ENCODE measurements at regions of chr1 and their contacts with region 1.

Region 1: DNA sequence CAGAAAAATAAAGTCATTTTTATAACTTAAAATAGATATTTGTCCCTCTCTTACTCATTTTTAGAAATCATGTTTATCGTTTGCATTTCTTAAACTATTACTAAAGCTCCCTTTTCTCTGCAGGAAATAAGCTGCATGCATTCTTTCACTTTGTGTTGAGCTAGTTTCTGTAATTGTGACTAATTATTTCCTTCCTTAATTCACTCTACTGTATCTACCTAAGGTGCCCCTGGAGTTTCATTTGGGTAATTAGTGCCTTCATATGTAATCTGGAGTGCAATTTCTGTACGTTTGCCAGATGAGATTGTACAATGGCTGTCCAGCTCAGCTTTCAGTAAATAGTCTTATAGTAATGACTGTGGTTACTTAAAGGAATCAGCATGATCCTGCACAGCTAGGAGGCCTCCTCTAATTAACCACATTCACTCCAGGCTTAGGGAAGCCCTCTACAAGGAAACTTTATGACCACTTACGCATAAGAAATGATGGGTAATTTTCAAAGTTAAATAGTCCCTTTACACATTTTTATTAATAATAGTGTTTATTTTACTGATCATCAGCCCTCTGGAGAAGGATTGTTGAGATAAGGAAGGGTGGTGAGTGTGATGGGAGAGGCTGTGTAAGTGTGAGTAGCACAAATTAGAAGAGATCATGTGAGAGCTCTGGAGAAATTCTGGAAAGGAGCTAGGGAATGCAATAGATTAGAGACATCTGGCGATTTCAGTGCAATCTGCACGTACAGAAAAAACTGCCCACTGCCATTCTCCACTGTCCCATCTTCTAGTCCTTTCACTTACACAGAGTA is 86.8 kb downstream of the LRRC8C start:
- DNase-seq: peak in 4 of 5 donors; percentile 30 to 45 (median 37)
- H3K4me3 ChIP-seq: no peak overlapping the region
- H3K4me3 Mint-ChIP-seq: peak overlapping the region in 7 of 8 donors; percentile 25 to 83 (median 70)
- H3K27ac ChIP-seq: peak overlapping the region; percentile 50
- H3K27ac Mint-ChIP-seq: peak overlapping the region; percentile 84 to 96 (median 91)
- H3K4me1 ChIP-seq: peaks cover 83% of the 10 kb centered on the region
- H3K4me1 Mint-ChIP-seq: peaks cover 52 to 81% (median 72%) of the 10 kb centered on the region in 4 donors
- H3K27me3 ChIP-seq: no peaks in the 10 kb centered on the region
- H3K27me3 Mint-ChIP-seq: no peaks in the 10 kb centered on the region

Region 2: DNA sequence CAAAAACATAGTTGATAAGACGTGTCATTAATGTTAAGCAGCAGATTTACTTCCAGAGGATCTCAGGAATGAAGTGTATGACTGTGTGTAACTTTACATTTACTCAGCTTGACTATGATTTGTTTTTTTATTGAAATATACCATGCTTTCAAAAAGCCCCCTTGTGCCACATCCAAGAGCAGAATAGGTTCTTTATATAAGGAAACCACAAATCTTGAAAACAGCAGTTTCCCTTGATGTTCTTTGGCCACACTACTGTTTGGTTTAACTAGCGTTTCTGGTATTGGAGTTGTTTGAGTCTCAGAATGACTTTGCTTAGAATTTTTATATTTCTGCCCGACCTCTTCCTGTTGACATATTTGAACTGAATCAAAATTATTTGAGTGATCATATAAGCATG is 61.8 kb before region 1 on chr1:
- CTCF ChIA-PET with region 1: interaction called, 11 read pairs
- POLR2A ChIA-PET with region 1: interaction called, 21 read pairs
- intact Hi-C with region 1: no loop called
- DNase-seq: peak; percentile 74 to 86 (median 76)
- H3K4me3 ChIP-seq: no peak overlapping the region
- H3K4me3 Mint-ChIP-seq: peak overlapping the region; percentile 34 to 78 (median 70)
- H3K27ac ChIP-seq: peak overlapping the region; percentile 57
- H3K27ac Mint-ChIP-seq: peak overlapping the region; percentile 86 to 97 (median 92)
- H3K4me1 ChIP-seq: peaks cover 97% of the 10 kb centered on the region
- H3K4me1 Mint-ChIP-seq: peaks cover 71 to 96% (median 85%) of the 10 kb centered on the region in 4 donors
- H3K27me3 ChIP-seq: no peaks in the 10 kb centered on the region
- H3K27me3 Mint-ChIP-seq: no peaks in the 10 kb centered on the region

Region 3: DNA sequence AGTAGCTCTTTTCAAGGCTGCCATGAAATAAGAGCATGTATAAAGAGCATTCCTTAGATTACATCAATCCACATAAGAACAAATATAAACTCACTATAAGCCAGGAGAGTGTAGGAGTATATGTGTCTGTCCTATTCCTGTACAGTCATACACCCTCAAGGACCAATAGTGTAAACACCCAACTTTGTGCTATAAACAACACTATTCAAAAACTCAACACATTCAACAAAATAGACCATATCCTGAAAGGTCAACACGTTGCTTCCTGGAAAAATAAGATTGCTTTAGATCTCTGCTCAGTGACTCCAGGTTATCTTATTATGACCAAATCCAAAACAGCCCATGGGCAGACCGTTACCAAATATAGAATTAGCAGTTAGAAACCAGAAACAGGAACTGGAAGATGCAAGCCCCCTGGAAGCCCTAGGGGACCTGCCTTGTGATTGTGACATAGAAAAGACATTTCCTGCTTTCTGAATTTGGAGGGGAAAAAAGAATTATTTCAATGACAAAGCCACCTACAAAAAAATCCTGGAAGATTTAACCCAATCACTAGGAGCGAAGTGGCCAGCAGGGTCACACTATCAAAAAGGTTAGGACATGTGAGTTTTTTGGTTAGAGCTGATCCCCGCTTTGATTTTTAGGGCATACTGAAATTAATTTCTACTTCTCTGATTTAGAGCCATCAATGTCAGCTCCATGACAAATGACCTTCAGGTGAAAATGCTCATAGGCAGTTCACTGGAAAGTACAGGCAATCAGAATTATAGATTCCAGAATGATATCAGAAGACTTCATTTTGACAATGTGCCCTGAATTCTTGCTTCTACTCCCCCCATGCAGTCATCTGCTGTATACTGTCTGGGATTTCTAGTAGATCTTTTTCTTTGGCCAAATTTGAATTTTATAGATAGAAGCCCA is 26.8 kb before region 1 on chr1:
- CTCF ChIA-PET with region 1: interaction called, 9 read pairs
- POLR2A ChIA-PET with region 1: interaction called, 14 read pairs
- intact Hi-C with region 1: loop called (anchors 2 kb)
- DNase-seq: no peak
- H3K4me3 ChIP-seq: no peak overlapping the region
- H3K4me3 Mint-ChIP-seq: peak overlapping the region in 5 of 8 donors; percentile 20 to 57 (median 43)
- H3K27ac ChIP-seq: no peak overlapping the region
- H3K27ac Mint-ChIP-seq: peak overlapping the region; percentile 72 to 88 (median 75)
- H3K4me1 ChIP-seq: peaks cover 70% of the 10 kb centered on the region
- H3K4me1 Mint-ChIP-seq: peaks cover 67 to 93% (median 79%) of the 10 kb centered on the region in 4 donors
- H3K27me3 ChIP-seq: no peaks in the 10 kb centered on the region
- H3K27me3 Mint-ChIP-seq: no peaks in the 10 kb centered on the region

Region 4: DNA sequence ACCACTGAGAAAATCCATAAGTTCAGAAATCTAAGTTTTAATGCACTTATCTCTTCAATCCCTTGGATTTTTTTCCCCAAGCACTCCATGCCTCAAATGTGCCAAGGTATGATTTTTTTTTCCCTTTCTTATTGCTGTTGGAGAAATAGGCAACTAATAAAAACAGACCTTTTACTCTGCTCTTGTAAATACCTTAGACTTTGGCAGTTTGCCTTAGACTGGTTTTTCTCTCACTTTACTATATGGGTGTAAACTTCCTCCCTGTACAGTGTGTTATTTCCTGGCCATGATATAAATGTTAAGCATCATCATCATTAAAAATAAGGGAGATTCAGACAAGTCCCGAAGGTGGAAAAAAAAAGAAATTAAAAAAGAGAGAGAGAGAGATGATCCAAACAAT is 21.1 kb before region 1 on chr1:
- CTCF ChIA-PET with region 1: interaction called, 9 read pairs
- POLR2A ChIA-PET with region 1: interaction called, 14 read pairs
- intact Hi-C with region 1: loop called (anchors 2 kb)
- DNase-seq: peak in 2 of 5 donors; percentile 19 to 23
- H3K4me3 ChIP-seq: peak overlapping the region in 1 of 2 donors; percentile 0
- H3K4me3 Mint-ChIP-seq: peak overlapping the region; percentile 78 to 91 (median 86)
- H3K27ac ChIP-seq: peak overlapping the region; percentile 16
- H3K27ac Mint-ChIP-seq: peak overlapping the region; percentile 81 to 95 (median 92)
- H3K4me1 ChIP-seq: peaks cover 89% of the 10 kb centered on the region
- H3K4me1 Mint-ChIP-seq: peaks cover 68 to 91% (median 82%) of the 10 kb centered on the region in 4 donors
- H3K27me3 ChIP-seq: no peaks in the 10 kb centered on the region
- H3K27me3 Mint-ChIP-seq: no peaks in the 10 kb centered on the region

Region 5: DNA sequence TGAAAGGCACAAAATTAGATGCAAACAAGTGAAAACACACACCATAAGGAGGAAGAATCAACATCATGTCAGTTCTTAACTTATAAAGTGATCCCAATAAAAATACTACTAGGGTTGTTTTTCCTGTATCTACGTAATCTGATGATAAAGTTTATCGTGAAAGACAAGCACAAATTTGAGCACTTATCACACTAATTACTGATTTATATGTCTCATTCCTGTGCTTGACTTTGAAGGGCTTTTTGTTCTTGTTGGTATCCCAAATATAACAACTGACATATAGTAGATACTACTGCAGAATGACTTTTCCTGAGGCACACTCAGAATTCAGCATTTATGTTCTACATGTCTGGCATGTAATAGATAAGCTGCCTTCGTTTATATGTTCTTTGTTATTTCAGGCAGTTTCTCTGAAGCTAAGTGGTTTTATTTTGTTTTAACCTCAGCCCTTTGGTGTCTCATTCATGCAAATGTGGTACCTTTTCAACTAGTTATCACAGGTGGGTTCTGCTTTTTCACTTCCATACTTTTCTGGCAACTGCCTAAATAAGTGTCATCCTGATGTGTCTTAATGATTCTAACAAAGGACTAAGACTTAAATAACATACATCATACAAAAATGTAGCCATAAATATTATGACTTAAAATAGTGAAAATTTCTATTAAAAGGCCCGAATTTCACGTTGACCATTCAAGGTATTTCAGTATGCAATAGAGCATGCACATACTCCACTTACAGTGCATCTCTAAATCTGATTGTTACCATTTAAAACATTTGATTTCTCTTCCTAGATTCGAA is 13.6 kb before region 1 on chr1:
- CTCF ChIA-PET with region 1: interaction called, 5 read pairs
- POLR2A ChIA-PET with region 1: interaction called, 7 read pairs
- intact Hi-C with region 1: loop called (anchors 2 kb)
- DNase-seq: no peak
- H3K4me3 ChIP-seq: no peak overlapping the region
- H3K4me3 Mint-ChIP-seq: no peak overlapping the region
- H3K27ac ChIP-seq: no peak overlapping the region
- H3K27ac Mint-ChIP-seq: peak overlapping the region in 4 of 7 donors; percentile 7 to 59 (median 14)
- H3K4me1 ChIP-seq: peaks cover 31% of the 10 kb centered on the region
- H3K4me1 Mint-ChIP-seq: peaks cover 32 to 71% (median 51%) of the 10 kb centered on the region in 4 donors
- H3K27me3 ChIP-seq: no peaks in the 10 kb centered on the region
- H3K27me3 Mint-ChIP-seq: no peaks in the 10 kb centered on the region

Region 6: GRCh38 chr1:89732643-89733222 is 13.0 kb after region 1 on chr1:
- CTCF ChIA-PET with region 1: interaction called, 3 read pairs
- POLR2A ChIA-PET with region 1: interaction called, 4 read pairs
- intact Hi-C with region 1: loop called (anchors 2 kb)
- DNase-seq: no peak
- H3K4me3 ChIP-seq: no peak overlapping the region
- H3K4me3 Mint-ChIP-seq: no peak overlapping the region
- H3K27ac ChIP-seq: no peak overlapping the region
- H3K27ac Mint-ChIP-seq: peak overlapping the region in 1 of 7 donors; percentile 56
- H3K4me1 ChIP-seq: peaks cover 19% of the 10 kb centered on the region
- H3K4me1 Mint-ChIP-seq: peaks cover 22 to 45% (median 36%) of the 10 kb centered on the region in 4 donors
- H3K27me3 ChIP-seq: no peaks in the 10 kb centered on the region
- H3K27me3 Mint-ChIP-seq: no peaks in the 10 kb centered on the region

Region 7: DNA sequence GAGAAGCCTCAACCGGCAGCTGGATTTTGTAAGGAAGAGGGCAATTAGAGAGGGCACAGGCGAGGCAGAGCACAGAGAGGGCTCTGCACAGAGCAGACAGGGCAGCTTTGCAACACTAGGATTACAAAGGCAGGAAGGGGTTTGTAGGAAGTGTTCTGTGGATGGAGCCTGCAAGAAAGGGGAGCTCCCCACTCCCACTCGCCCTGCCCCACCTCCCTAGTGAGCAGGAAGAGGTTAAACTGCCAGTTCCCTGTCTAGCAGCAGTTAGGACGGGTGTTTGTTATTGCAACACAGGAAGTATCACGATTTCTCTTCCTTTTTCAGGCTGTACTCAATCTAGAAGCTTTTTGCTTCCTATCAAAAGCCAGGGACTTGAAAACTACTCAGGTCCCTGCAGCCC is 37.8 kb after region 1 on chr1:
- CTCF ChIA-PET with region 1: interaction called, 54 read pairs
- POLR2A ChIA-PET with region 1: interaction called, 36 read pairs
- intact Hi-C with region 1: no loop called
- DNase-seq: peak; percentile 30 to 57 (median 42)
- H3K4me3 ChIP-seq: peak overlapping the region; percentile 31 to 38
- H3K4me3 Mint-ChIP-seq: peak overlapping the region; percentile 78 to 90 (median 85)
- H3K27ac ChIP-seq: peak overlapping the region; percentile 56
- H3K27ac Mint-ChIP-seq: peak overlapping the region; percentile 79 to 97 (median 92)
- H3K4me1 ChIP-seq: peaks cover 92% of the 10 kb centered on the region
- H3K4me1 Mint-ChIP-seq: peaks cover 64 to 92% (median 78%) of the 10 kb centered on the region in 4 donors
- H3K27me3 ChIP-seq: no peaks in the 10 kb centered on the region
- H3K27me3 Mint-ChIP-seq: no peaks in the 10 kb centered on the region

Region 8: DNA sequence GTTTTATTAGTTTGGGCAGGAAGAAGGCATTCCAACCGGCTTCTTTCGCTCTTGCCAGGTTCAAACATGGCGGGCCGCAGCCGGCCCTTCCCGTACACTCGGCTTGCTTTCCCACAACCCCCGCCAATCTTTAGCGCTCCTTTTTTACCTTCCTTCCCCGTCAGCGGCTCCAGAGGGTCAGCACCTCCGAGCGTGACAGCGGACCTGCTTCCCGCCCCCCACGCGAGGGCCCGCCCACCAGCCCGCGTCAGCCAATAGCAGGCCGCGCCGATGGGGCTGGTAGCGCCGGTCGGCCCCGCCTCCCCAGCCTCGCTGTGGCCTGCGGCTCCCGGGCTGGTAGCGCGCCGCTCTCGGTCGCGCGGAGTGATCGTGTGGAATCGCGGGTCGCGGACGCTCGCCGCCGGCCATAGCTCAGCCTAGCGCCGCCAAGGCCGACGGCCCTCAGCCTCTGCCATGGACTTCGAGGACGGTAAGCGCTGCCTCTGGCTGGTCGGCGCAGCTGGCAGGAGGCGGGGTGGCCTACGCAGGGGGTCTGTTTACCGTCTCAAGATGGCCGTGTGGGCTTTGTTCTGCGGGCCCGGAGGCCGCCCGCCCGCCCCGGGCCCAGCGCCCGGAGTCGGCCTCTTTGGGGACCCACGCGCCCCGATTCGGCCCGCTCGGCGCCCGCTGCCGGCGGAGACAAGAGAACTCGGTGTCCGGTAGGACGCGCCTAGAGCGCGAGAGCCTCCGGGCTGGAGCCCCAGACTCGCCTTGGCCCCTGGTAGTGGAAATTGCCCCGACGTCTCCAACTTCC is 275.3 kb after region 1 on chr1 and contains the start of gene ZNF326:
- CTCF ChIA-PET with region 1: no interaction called
- POLR2A ChIA-PET with region 1: no interaction called
- intact Hi-C with region 1: no loop called
- DNase-seq: peak; percentile 89 to 96 (median 92)
- H3K4me3 ChIP-seq: peak within 1 kb of the TSS; percentile 77 to 95
- H3K4me3 Mint-ChIP-seq: peak within 1 kb of the TSS; percentile 92 to 100 (median 98)
- H3K27ac ChIP-seq: peak within 1 kb of the TSS; percentile 83
- H3K27ac Mint-ChIP-seq: peak within 1 kb of the TSS; percentile 87 to 99 (median 95)
- H3K4me1 ChIP-seq: peaks cover 36% of the 10 kb centered on the region
- H3K4me1 Mint-ChIP-seq: peaks cover 21 to 41% (median 31%) of the 10 kb centered on the region in 4 donors
- H3K27me3 ChIP-seq: no peaks in the 10 kb centered on the region
- H3K27me3 Mint-ChIP-seq: no peaks in the 10 kb centered on the region
- total RNA-seq, gene ZNF326: 17.4 to 20.6 TPM

Measured in CD4-positive, alpha-beta memory T cell (primary cell).